ENCODE measurements at regions of chr3 and their contacts with region 1.

Region 1: GRCh38 chr3:116757315-116757714 is 47.7 kb downstream of the TUSC7 start:
- DNase-seq: no peak
- CTCF ChIP-seq: no peak

Region 2: DNA sequence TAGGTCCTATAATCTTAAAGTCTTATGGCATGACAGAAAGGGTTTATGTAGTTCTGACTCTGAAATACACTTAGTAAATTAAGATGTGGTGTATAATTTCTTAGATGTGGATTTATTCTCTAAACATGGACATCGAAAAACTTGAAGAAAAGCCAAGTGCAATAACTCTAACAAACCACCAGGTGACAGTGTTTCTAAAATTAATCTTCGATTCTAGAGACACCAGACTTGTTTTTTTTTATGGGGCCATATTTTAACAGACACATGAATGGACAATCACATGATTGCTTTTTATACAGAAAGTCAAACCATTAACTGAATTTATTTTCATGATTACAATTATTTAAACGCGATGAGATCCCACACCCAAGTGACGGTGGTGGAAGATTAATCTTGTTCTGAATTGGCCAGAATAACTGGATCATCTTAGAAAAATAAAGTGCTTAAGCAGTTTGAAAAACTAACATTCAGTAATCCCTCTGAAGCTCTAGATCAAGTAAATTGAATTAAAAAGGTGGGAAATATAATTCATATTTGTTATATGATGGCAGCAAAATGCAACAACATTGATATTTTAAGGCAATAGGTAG is 617.1 kb before region 1 on chr3:
- in situ Hi-C with region 1: loop called (anchors 10 kb)
- DNase-seq: no peak
- CTCF ChIP-seq: peak; percentile 62

Measured in GM13977 (cell line).